ENCODE measurements at regions of chr12 and their contacts with region 1.

Region 1: DNA sequence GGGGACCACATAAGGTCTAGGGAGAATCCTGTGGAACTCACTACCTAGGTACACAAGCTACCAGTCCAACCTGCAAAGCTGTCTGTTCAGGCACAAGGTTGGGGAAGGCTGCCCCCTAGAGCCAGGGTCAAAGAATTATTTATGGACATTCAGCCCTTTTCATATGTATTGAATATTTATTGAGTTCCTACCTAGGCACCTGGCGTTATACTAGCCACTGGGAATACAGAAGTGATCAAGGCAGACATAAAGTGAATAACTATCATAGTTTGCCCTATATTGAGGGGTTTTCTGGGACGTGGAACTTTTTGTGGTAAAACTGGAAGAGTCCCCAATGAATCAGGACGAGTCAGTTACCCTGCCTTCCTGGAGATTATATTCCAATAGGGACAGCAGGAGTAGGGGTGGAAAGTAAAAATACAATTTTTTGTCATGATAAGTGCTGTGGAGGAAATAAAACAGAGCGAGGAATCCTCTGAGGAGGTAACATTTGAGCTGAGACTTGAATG is 5.8 kb upstream of the SLC48A1 start:
- DNase-seq: peak; percentile 75 to 86 (median 80)
- H3K4me3 ChIP-seq: no peak overlapping the region
- H3K27ac ChIP-seq: no peak overlapping the region
- H3K4me1 ChIP-seq: peaks cover 4 to 44% (median 26%) of the 10 kb centered on the region in 4 experiments
- H3K27me3 ChIP-seq: no peaks in the 10 kb centered on the region

Region 2: GRCh38 chr12:47828608-47829536 is 61.6 kb after region 1 on chr12:
- CTCF ChIA-PET with region 1: interaction called, 10 read pairs
- POLR2A ChIA-PET with region 1: no interaction called
- DNase-seq: no peak
- H3K4me3 ChIP-seq: peak overlapping the region in 1 of 7 experiments; percentile 2
- H3K27ac ChIP-seq: peak overlapping the region in 1 of 2 experiments; percentile 49
- H3K4me1 ChIP-seq: peaks cover 2 to 54% (median 43%) of the 10 kb centered on the region in 4 experiments
- H3K27me3 ChIP-seq: no peaks in the 10 kb centered on the region